Dorsolateral prefrontal cortex (tissue), 120 donors: ENCODE measurements at regions of chr15 and their contacts with region 1.

Region 1: GRCh38 chr15:65355173-65355987 is 22.4 kb downstream of the IGDCC3 start:
- DNase-seq: peak; percentile 44 to 89 (median 78)
- H3K4me3 ChIP-seq: peak overlapping the region; percentile 43 to 75 (median 61)
- H3K27ac ChIP-seq: peak overlapping the region; percentile 42 to 95 (median 87)
- H3K27me3 ChIP-seq: no peaks in the 10 kb centered on the region
- CTCF ChIP-seq: peak in 5 of 56 donors; percentile 8 to 27 (median 14)

Region 2: DNA sequence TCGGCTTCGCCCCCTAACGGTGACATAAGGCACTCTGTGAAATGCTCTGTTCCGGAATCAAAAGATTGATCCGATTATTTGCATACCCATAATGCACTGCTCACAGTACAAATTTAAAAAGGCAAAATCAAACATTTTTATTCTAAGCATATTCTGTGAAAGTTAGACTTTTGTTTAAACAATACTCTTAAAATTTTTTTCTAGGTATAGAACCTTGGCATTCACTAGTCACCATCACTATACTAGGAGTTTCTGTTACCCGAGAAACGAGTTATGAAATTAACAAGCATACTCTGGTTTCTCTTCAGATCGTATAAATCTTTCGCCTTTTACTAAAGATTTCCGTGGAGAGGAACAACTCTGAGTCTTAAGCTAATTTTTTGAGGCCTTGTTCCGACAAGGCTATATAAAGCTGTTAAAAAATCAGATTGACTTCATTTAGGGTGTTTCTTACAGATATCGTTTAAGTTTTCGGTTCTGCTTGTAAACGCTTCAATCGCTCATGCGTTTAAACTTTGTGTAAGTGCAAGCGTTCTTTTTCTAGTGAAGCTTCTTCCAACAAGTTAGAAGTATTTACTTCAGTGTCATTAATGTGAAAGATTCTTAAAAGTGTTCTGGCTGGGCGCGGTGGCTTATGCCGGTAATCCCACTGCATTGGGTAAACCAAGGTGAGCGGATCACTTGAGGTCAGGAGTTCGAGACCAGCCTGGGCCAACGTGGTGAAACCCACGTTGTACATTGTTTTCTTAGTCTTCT is 50.8 kb before region 1 on chr15 and contains the start of gene RNU5B-1:
- intact Hi-C with region 1: no loop called
- DNase-seq: peak; percentile 29 to 83 (median 73)
- H3K4me3 ChIP-seq: peak within 1 kb of the TSS; percentile 41 to 82 (median 66)
- H3K27ac ChIP-seq: peak within 1 kb of the TSS; percentile 65 to 99 (median 95)
- H3K27me3 ChIP-seq: no peaks in the 10 kb centered on the region
- CTCF ChIP-seq: peak; percentile 7 to 95 (median 85)
- total RNA-seq, gene RNU5B-1: 23.0 to 207 (median 47.4) TPM in 74 of 120 experiments, not detected in the others

Region 3: GRCh38 chr15:65318870-65319356 is 36.5 kb before region 1 on chr15:
- intact Hi-C with region 1: loop called in 1 of 2 experiments (anchors 5 kb)
- DNase-seq: peak; percentile 70 to 88 (median 84)
- H3K4me3 ChIP-seq: no peak overlapping the region
- H3K27ac ChIP-seq: peak overlapping the region in 16 of 59 donors; percentile 0 to 73 (median 29)
- H3K27me3 ChIP-seq: no peaks in the 10 kb centered on the region
- CTCF ChIP-seq: peak; percentile 85 to 99 (median 97)

Region 4: GRCh38 chr15:65377104-65377975 is 22.0 kb after region 1 on chr15:
- intact Hi-C with region 1: loop called in 1 of 2 experiments (anchors 2 kb)
- DNase-seq: peak in 4 of 10 donors; percentile 42 to 68 (median 44)
- H3K4me3 ChIP-seq: peak overlapping the region; percentile 41 to 87 (median 73)
- H3K27ac ChIP-seq: peak overlapping the region in 43 of 59 donors; percentile 19 to 84 (median 59)
- H3K27me3 ChIP-seq: peaks cover 0 to 6% (median 0%) of the 10 kb centered on the region in 45 donors
- CTCF ChIP-seq: no peak

Region 5: GRCh38 chr15:65384895-65385858 is 29.8 kb after region 1 on chr15:
- intact Hi-C with region 1: loop called (anchors 2 kb)
- DNase-seq: peak; percentile 85 to 92 (median 90)
- H3K4me3 ChIP-seq: peak overlapping the region; percentile 3 to 65 (median 49)
- H3K27ac ChIP-seq: peak overlapping the region in 58 of 59 donors; percentile 3 to 90 (median 78)
- H3K27me3 ChIP-seq: no peaks in the 10 kb centered on the region
- CTCF ChIP-seq: peak; percentile 72 to 97 (median 90)